ENCODE measurements at regions of chr6 and their contacts with region 1.

Region 1: DNA sequence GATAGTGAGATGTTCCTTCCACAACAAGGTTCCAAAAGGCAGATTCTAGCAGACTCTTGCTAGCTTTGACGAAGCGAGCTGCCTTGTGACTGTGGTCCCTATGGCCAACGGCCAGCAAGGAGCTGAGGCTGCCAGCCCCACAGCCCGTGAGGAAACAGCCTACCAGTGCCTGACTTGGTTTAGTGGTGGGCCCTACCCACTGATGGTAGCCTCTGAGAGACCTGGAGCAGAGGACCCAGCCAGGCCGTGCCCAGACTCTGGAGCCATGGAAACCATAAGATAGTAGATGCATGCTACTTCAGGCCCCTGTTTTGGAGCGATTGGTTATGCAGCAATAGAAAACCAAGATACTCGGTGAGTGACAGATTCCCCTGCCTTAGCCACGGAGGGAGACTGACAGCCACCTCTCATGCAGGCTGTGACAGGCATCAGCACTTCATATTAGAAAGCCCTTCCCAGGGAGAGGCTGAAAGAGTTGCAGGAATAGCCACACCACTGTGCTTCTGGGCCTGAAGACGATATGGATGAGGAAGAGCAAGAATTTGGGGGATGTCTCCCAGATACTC is 19.2 kb downstream of the PSMG4 start:
- DNase-seq: no peak
- ATAC-seq: no peak

Region 2: GRCh38 chr6:3732345-3733141 is 454.6 kb after region 1 on chr6:
- intact Hi-C with region 1: loop called (anchors 1 kb)
- DNase-seq: peak; percentile 87
- ATAC-seq: peak; percentile 75

Region 3: GRCh38 chr6:3990692-3991501 is 713.0 kb after region 1 on chr6:
- intact Hi-C with region 1: loop called (anchors 5 kb)
- DNase-seq: peak; percentile 88
- ATAC-seq: peak; percentile 93

Measured in Right ventricle myocardium inferior (tissue), 1 donor.